ENCODE measurements at regions of chr2 and their contacts with region 1.

Region 1: DNA sequence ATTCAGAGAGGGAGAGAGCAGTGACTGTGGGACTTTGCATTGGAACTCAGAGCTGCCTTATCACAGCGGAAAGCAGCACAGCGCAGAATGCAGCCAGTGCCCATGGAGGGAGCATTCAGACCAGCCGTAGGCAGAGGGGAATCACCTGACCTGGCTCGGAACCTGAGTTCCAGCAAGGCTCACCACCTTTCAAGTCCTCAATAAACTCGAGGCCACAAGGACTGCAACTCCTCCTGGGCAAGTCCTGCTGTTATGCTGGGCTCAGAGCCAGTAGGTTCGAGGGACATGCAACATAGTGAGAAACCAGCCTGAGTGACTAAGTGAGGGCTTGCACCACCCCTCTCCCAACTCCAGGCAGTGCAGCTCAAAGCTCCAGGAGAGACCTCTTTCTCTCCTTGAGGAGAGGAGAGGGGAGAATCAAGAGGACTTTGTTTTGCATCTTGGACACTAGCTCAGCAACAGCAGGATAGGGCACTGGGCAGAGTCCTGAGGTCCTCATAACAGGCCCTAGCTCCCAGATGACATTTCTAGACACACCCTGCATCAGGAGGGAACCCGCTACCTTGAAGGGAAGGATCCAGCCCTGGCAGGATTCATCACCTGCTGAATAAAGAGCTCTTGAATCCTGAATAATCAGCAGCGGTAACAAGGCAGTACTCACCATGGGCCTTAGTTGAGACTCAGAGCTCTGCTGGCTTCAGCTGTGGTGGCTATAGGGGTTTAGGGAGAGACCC is 136.8 kb upstream of the OTOS start:
- DNase-seq: peak; percentile 77 to 85
- ATAC-seq: no peak
- H3K4me3 ChIP-seq: no peak overlapping the region
- H3K27ac ChIP-seq: no peak overlapping the region
- H3K4me1 ChIP-seq: no peaks in the 10 kb centered on the region
- H3K27me3 ChIP-seq: no peaks in the 10 kb centered on the region

Region 2: DNA sequence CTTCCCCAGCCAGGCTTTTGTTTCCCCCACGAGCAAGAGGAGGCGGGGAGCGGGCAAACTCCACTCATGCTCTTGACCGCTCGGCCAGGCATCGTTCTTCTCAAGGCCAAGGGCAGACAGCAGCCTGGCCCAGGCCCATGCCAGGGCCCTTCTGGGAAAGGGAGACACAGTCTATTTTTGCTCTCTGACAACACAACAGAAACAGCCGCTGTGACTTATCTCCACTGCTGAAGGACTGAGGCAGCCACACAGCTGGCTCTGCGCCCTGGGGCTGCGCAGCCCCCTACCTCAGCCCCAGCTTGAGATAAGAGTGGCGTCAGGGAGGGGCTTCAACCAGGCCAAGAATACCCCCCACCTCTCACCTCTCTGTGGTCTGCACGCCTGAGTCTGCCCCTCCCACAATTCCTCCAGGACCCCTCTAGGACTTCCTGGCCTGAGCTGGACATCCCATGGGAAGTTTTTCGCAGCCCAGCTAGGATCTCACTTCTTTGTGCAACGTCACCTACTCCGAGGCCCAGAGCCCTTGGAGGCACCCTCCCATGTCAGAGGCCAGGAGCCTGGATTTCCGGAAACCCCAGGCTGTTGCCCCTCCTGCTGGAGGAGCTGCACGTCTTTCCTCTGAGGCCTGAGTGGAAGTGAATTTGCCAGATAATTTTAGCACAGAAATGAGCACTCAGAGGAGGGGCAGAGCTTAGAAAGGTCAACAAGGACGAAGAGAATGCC is 17.9 kb before region 1 on chr2:
- intact Hi-C with region 1: loop called in 1 of 2 experiments (anchors 1 kb)
- DNase-seq: peak; percentile 91 to 93
- ATAC-seq: peak; percentile 89
- H3K4me3 ChIP-seq: no peak overlapping the region
- H3K27ac ChIP-seq: peak overlapping the region; percentile 85 to 99
- H3K4me1 ChIP-seq: no peaks in the 10 kb centered on the region
- H3K27me3 ChIP-seq: no peaks in the 10 kb centered on the region

Region 3: GRCh38 chr2:240320204-240320993 is 43.2 kb after region 1 on chr2:
- intact Hi-C with region 1: no loop called
- DNase-seq: peak; percentile 64 to 82
- ATAC-seq: no peak
- H3K4me3 ChIP-seq: no peak overlapping the region
- H3K27ac ChIP-seq: no peak overlapping the region
- H3K4me1 ChIP-seq: no peaks in the 10 kb centered on the region
- H3K27me3 ChIP-seq: no peaks in the 10 kb centered on the region